Colonic mucosa (tissue), 4 donors: ENCODE measurements at regions of chr12 and their contacts with region 1.

Region 1: GRCh38 chr12:50765095-50765911 is 1.4 kb downstream of the ATF1 start:
- DNase-seq: peak; percentile 58
- H3K4me3 ChIP-seq: peak overlapping the region; percentile 91
- H3K27ac ChIP-seq: peak overlapping the region; percentile 80
- H3K4me1 ChIP-seq: no peaks in the 10 kb centered on the region
- H3K27me3 ChIP-seq: no peaks in the 10 kb centered on the region
- CTCF ChIP-seq: peak; percentile 74

Region 2: GRCh38 chr12:50825372-50825838 is 60.1 kb after region 1 on chr12:
- intact Hi-C with region 1: loop called (anchors 5 kb)
- DNase-seq: no peak
- H3K4me3 ChIP-seq: no peak overlapping the region
- H3K27ac ChIP-seq: no peak overlapping the region
- H3K4me1 ChIP-seq: no peaks in the 10 kb centered on the region
- H3K27me3 ChIP-seq: no peaks in the 10 kb centered on the region
- CTCF ChIP-seq: peak; percentile 45

Region 3: GRCh38 chr12:50848963-50849362 is 83.7 kb after region 1 on chr12:
- intact Hi-C with region 1: no loop called
- DNase-seq: no peak
- H3K4me3 ChIP-seq: no peak overlapping the region
- H3K27ac ChIP-seq: no peak overlapping the region
- H3K4me1 ChIP-seq: no peaks in the 10 kb centered on the region
- H3K27me3 ChIP-seq: no peaks in the 10 kb centered on the region
- CTCF ChIP-seq: no peak